PC-3 (cell line): ENCODE measurements at regions of chr1 and their contacts with region 1.

Region 1: DNA sequence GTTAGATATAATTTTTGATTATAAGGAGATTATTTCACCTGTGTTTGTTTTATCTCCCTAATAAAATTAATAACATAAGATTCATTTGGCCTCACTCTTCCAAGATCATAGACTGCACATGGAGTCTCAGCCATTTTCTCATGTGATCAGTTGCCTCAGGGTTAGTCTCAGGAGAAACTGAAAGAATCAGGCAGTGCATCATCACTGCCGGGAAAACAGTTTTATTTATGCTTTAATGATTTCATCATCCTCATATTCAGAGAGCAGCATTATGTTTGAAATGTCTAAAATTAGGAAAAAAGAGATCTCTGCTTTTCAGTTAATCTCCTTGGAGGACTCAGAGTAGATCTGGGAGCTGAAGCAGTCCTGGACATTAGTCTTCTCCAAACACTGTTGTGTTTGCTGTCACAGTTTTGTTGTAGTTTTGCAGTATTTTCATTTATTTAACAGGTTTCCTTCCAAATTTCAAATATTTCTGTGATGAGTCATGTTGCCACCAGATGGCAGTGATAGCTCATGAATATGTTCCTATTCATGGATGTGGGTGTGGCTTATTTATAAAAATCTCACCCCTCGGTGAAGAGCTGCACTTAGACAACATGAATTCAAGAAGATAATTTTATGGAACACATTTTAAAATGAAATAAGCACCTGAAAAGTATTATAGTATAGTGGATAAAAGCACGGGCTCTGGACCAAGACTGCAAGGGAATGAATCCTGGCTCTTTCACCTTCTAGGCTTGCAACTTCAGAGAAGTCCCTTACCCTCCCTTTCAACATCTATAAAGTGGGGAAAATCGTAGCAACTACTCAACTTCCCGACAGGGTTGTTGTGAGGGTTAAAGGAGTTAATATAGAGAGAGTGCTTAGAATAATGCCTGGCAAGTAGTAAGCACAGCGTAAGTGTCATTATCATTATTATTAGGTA is 31.2 kb downstream of the CHD1L start:
- DNase-seq: peak; percentile 92
- ATAC-seq: peak; percentile 82
- H3K4me3 ChIP-seq: peak overlapping the region; percentile 26
- H3K27ac ChIP-seq: peak overlapping the region; percentile 41
- H3K4me1 ChIP-seq: peaks cover 30% of the 10 kb centered on the region
- H3K27me3 ChIP-seq: no peaks in the 10 kb centered on the region
- CTCF ChIP-seq: peak; percentile 90

Region 2: DNA sequence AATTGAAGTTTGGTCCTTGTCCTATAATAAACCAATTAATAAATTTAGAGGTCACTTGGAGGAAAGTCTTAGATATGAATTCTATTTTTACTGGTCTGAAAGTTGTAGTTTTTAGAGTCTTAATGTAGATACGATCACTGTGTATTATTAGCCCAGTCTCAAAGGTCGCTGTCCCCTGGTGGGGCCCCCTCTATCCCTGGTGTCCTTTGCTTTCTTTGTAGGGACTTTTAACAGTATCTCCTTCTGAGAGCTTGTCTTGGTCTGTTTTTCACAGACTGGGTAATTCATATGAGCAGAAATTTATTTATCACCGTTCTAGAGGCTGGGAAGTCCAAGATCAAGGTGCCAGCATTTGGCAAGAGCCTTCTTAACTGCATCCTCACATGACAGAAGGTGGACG is 12.7 kb before region 1 on chr1:
- CTCF ChIA-PET with region 1: interaction called, 13 read pairs
- POLR2A ChIA-PET with region 1: no interaction called
- intact Hi-C with region 1: no loop called
- DNase-seq: no peak
- ATAC-seq: no peak
- H3K4me3 ChIP-seq: no peak overlapping the region
- H3K27ac ChIP-seq: no peak overlapping the region
- H3K4me1 ChIP-seq: peaks cover 17% of the 10 kb centered on the region
- H3K27me3 ChIP-seq: no peaks in the 10 kb centered on the region
- CTCF ChIP-seq: no peak

Region 3: GRCh38 chr1:147292631-147293251 is 19.1 kb after region 1 on chr1:
- CTCF ChIA-PET with region 1: interaction called, 4 read pairs
- POLR2A ChIA-PET with region 1: no interaction called
- intact Hi-C with region 1: loop called (anchors 2 kb)
- DNase-seq: peak; percentile 81
- ATAC-seq: peak; percentile 54
- H3K4me3 ChIP-seq: peak overlapping the region; percentile 2
- H3K27ac ChIP-seq: peak overlapping the region; percentile 94
- H3K4me1 ChIP-seq: peaks cover 23% of the 10 kb centered on the region
- H3K27me3 ChIP-seq: no peaks in the 10 kb centered on the region
- CTCF ChIP-seq: no peak

Region 4: GRCh38 chr1:147351140-147351835 is 77.6 kb after region 1 on chr1:
- CTCF ChIA-PET with region 1: no interaction called
- POLR2A ChIA-PET with region 1: no interaction called
- intact Hi-C with region 1: no loop called
- DNase-seq: no peak
- ATAC-seq: no peak
- H3K4me3 ChIP-seq: no peak overlapping the region
- H3K27ac ChIP-seq: no peak overlapping the region
- H3K4me1 ChIP-seq: no peaks in the 10 kb centered on the region
- H3K27me3 ChIP-seq: peaks cover 51% of the 10 kb centered on the region
- CTCF ChIP-seq: no peak

Region 5: GRCh38 chr1:147389532-147390524 is 116.2 kb after region 1 on chr1:
- CTCF ChIA-PET with region 1: interaction called, 33 read pairs
- POLR2A ChIA-PET with region 1: no interaction called
- intact Hi-C with region 1: loop called (anchors 1 kb)
- DNase-seq: peak; percentile 82
- ATAC-seq: peak; percentile 94
- H3K4me3 ChIP-seq: no peak overlapping the region
- H3K27ac ChIP-seq: no peak overlapping the region
- H3K4me1 ChIP-seq: no peaks in the 10 kb centered on the region
- H3K27me3 ChIP-seq: no peaks in the 10 kb centered on the region
- CTCF ChIP-seq: peak; percentile 89

Region 6: DNA sequence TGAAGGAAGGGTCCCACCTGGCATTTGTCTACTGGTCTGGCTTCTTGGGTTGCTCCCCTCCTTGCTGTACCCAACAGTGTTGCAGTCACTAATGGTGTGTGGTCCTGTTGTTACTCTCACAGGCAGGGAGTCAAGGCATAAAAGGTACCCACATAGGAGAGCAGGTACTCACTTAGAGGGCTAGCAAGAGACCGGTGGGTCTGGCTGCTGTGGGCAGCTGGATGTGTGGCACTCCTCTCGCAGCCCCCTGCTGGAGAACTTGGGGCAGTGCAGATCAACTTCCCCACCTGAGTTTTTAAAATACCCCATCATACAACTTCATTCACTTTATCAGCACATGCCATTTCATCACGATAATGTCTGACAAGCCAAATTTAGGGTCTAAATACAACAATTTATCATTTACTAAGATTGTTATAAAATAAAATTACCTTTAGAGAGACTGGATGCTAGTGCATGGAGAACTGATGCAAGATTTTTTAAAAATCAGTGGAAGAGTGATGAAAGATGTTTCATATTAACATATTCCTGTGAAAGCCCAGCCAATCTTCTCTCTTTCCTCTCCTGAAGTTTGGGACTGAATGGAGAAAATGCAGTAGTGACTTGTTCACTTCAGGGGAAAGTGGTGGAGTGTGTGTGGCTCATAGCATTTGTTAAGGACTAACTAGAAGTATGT is 353.9 kb after region 1 on chr1:
- CTCF ChIA-PET with region 1: no interaction called
- POLR2A ChIA-PET with region 1: no interaction called
- intact Hi-C with region 1: loop called (anchors 5 kb)
- DNase-seq: peak; percentile 72
- ATAC-seq: peak; percentile 70
- H3K4me3 ChIP-seq: no peak overlapping the region
- H3K27ac ChIP-seq: no peak overlapping the region
- H3K4me1 ChIP-seq: no peaks in the 10 kb centered on the region
- H3K27me3 ChIP-seq: no peaks in the 10 kb centered on the region
- CTCF ChIP-seq: peak; percentile 97

Region 7: DNA sequence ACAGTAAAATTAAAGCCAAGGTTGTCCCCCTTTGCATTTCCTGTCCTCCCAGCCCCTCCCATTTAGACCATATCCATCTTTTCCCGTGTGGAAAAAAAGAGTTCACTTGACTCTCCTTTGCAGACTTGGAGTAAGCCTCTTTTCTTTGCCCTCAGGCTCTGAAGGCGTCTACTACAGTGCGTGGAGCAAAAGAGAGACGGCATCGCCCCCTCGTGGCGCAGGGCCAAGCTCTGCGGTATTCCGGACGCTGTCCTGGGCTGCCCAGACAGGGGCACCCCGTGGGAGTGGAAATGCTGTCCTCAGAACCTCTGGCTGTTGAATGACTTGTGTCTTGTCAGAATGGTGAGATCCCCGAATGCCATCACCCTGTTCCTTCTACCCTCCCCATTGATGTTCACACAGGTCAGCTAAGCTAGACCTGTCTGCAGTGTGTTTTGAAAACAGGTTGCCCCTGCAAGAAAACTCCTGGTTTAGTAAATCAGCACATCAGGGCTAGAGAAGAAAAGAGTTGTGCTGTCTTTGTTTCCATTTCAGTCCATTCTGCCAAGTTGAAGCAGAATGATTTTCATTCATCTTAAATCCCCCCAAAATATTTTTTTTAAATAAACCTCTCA is 616.6 kb after region 1 on chr1:
- CTCF ChIA-PET with region 1: no interaction called
- POLR2A ChIA-PET with region 1: no interaction called
- intact Hi-C with region 1: loop called (anchors 10 kb)
- DNase-seq: peak; percentile 97
- ATAC-seq: peak; percentile 86
- H3K4me3 ChIP-seq: no peak overlapping the region
- H3K27ac ChIP-seq: no peak overlapping the region
- H3K4me1 ChIP-seq: peaks cover 26% of the 10 kb centered on the region
- H3K27me3 ChIP-seq: no peaks in the 10 kb centered on the region
- CTCF ChIP-seq: peak; percentile 98